GM12878 (cell line): ENCODE measurements at regions of chr3 and their contacts with region 1.

Region 1: DNA sequence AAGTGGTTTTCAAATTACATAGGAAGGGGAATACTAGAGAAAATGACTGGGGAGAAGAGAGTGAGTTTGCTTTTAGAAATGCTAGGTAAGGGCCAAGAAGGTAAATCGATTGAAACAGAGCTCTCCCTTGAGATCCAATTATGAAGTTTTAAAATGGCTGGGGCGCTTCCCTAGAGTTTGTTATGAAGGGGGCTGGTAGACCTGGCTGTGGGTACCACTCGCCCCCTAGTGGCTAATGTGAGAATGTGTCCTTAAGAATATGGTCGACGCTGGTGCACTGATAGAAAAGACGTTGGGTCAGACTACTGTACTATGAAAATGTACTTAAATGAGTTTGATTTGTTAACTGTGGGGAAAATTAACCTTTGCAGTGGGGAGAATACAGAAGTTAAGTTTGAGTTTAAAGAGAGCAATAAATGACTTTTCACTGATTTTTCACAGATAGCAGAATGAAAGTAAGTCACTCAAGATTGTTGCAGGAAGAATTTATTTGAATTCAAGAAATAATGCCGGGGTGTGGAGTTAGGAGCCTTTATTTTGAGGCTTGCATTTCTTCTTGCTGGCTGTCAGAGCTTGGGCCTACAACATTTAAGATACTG is 9.2 kb downstream of the TMPRSS7 start:
- DNase-seq: peak; percentile 8
- ATAC-seq: peak; percentile 95
- H3K4me3 ChIP-seq: no peak overlapping the region
- H3K27ac ChIP-seq: no peak overlapping the region
- H3K4me1 ChIP-seq: no peaks in the 10 kb centered on the region
- H3K27me3 ChIP-seq: peaks cover 0 to 6% of the 10 kb centered on the region in 2 experiments; a peak in 1 of 4 replicates
- CTCF ChIP-seq: peak; percentile 80 to 92 (median 86)
- EP300 ChIP-seq: no peak
- POLR2A ChIP-seq: no peak
- RAD21 ChIP-seq: peak; percentile 69

Region 2: GRCh38 chr3:111978493-111979433 is 64.9 kb before region 1 on chr3 and contains the start of gene ABHD10:
- CTCF ChIA-PET with region 1: interaction called, 11 read pairs
- POLR2A ChIA-PET with region 1: interaction called, 8 read pairs
- RAD21 ChIA-PET with region 1: interaction called, 9 read pairs
- SMC1A ChIA-PET with region 1: interaction called, 15 read pairs
- in situ Hi-C with region 1: no loop called
- intact Hi-C with region 1: no loop called
- DNase-seq: peak; percentile 92
- ATAC-seq: peak; percentile 97
- H3K4me3 ChIP-seq: peak within 1 kb of the TSS; percentile 89
- H3K27ac ChIP-seq: peak within 1 kb of the TSS; percentile 78
- H3K4me1 ChIP-seq: peaks cover 5% of the 10 kb centered on the region
- H3K27me3 ChIP-seq: no peaks in the 10 kb centered on the region
- CTCF ChIP-seq: no peak
- EP300 ChIP-seq: no peak
- POLR2A ChIP-seq: peak; percentile 99
- RAD21 ChIP-seq: no peak
- polyA plus RNA-seq, gene ABHD10: 12.3 to 16.7 TPM

Region 3: GRCh38 chr3:111998636-111999483 is 44.8 kb before region 1 on chr3 and contains the start of gene TAGLN3:
- CTCF ChIA-PET with region 1: interaction called, 99 read pairs
- POLR2A ChIA-PET with region 1: no interaction called
- RAD21 ChIA-PET with region 1: no interaction called
- SMC1A ChIA-PET with region 1: interaction called, 8 read pairs
- in situ Hi-C with region 1: no loop called
- intact Hi-C with region 1: no loop called
- DNase-seq: no peak
- ATAC-seq: peak; percentile 66
- H3K4me3 ChIP-seq: peak within 1 kb of the TSS; percentile 66
- H3K27ac ChIP-seq: no peak within 1 kb of the TSS
- H3K4me1 ChIP-seq: peaks cover 6% of the 10 kb centered on the region; the same call in 1 of the 2 replicates
- H3K27me3 ChIP-seq: peaks cover 0 to 2% of the 10 kb centered on the region in 2 experiments; a peak in 3 of 4 replicates
- CTCF ChIP-seq: no peak
- EP300 ChIP-seq: no peak
- POLR2A ChIP-seq: no peak
- RAD21 ChIP-seq: no peak
- polyA plus RNA-seq, gene TAGLN3: 0.07 TPM in 1 of 2 experiments, not detected in the other